ENCODE measurements at regions of chr14 and their contacts with region 1.

Region 1: GRCh38 chr14:64178814-64179213 is 115.4 kb downstream of the ESR2 start:
- DNase-seq: no peak
- H3K4me3 Mint-ChIP-seq: no peak overlapping the region
- H3K27ac Mint-ChIP-seq: no peak overlapping the region
- H3K4me1 Mint-ChIP-seq: peaks cover 29% of the 10 kb centered on the region
- H3K27me3 Mint-ChIP-seq: no peaks in the 10 kb centered on the region

Region 2: DNA sequence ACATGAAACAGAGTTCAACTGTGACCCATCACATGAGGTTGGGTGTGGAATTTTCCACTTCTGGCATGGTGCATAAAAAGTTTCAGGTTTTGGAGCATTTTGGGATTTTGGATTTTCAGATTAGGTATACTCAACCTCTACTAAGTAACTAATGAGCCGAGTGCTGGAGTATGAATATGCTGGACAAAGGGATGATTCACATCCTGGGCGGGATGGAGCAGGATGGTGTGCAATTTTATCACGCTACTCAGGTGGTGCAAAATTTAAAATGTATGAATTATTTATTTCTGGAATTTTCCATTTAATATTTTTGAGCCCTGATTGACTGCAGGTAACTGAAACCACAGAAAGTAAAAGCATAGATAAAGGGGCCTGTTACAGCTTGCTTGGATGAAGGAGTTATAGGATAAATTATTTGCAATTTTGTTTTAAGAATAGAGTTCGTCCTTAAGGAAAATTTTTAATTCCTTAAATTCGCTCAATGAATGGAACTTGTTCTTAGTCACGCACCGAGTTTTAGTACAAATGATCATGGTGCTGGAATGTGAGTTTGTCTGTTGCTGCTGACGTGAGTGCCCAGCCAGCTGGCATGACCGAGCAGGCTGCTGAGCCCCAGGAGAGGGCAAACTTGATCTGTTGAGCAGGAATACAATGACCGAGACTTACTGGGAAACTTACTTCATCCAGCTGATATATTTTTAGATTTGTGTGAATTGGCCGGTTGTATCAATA is 61.0 kb before region 1 on chr14:
- CTCF ChIA-PET with region 1: no interaction called
- POLR2A ChIA-PET with region 1: interaction called, 3 read pairs
- intact Hi-C with region 1: loop called (anchors 5 kb)
- DNase-seq: no peak
- H3K4me3 Mint-ChIP-seq: no peak overlapping the region
- H3K27ac Mint-ChIP-seq: no peak overlapping the region
- H3K4me1 Mint-ChIP-seq: peaks cover 8% of the 10 kb centered on the region
- H3K27me3 Mint-ChIP-seq: no peaks in the 10 kb centered on the region

Region 3: GRCh38 chr14:64196814-64197411 is 18.1 kb after region 1 on chr14:
- CTCF ChIA-PET with region 1: no interaction called
- POLR2A ChIA-PET with region 1: no interaction called
- intact Hi-C with region 1: no loop called
- DNase-seq: peak; percentile 42
- H3K4me3 Mint-ChIP-seq: peak overlapping the region; percentile 64
- H3K27ac Mint-ChIP-seq: peak overlapping the region; percentile 74
- H3K4me1 Mint-ChIP-seq: peaks cover 51% of the 10 kb centered on the region
- H3K27me3 Mint-ChIP-seq: no peaks in the 10 kb centered on the region

Region 4: GRCh38 chr14:64232095-64232838 is 53.5 kb after region 1 on chr14:
- CTCF ChIA-PET with region 1: no interaction called
- POLR2A ChIA-PET with region 1: no interaction called
- intact Hi-C with region 1: loop called (anchors 5 kb)
- DNase-seq: peak; percentile 51
- H3K4me3 Mint-ChIP-seq: no peak overlapping the region
- H3K27ac Mint-ChIP-seq: peak overlapping the region; percentile 55
- H3K4me1 Mint-ChIP-seq: peaks cover 12% of the 10 kb centered on the region
- H3K27me3 Mint-ChIP-seq: no peaks in the 10 kb centered on the region

Measured in activated CD4-positive, alpha-beta memory T cell treated with anti-CD3 and anti-CD28 coated beads for 36 hours (primary cell).